Activated CD4-positive, alpha-beta T cell treated with anti-CD3 and anti-CD28 coated beads for 36 hours (primary cell): ENCODE measurements at regions of chr5 and their contacts with region 1.

Region 1: GRCh38 chr5:91219803-91220371 is 163.2 kb downstream of the ARRDC3 start:
- DNase-seq: peak; percentile 66
- ATAC-seq: peak; percentile 51
- H3K4me3 Mint-ChIP-seq: no peak overlapping the region
- H3K27ac Mint-ChIP-seq: no peak overlapping the region
- H3K4me1 Mint-ChIP-seq: no peaks in the 10 kb centered on the region
- H3K27me3 Mint-ChIP-seq: no peaks in the 10 kb centered on the region

Region 2: GRCh38 chr5:90866333-90866732 is 353.6 kb before region 1 on chr5:
- CTCF ChIA-PET with region 1: interaction called, 3 read pairs
- POLR2A ChIA-PET with region 1: no interaction called
- intact Hi-C with region 1: loop called (anchors 5 kb)
- DNase-seq: no peak
- ATAC-seq: no peak
- H3K4me3 Mint-ChIP-seq: no peak overlapping the region
- H3K27ac Mint-ChIP-seq: no peak overlapping the region
- H3K4me1 Mint-ChIP-seq: peaks cover 7% of the 10 kb centered on the region
- H3K27me3 Mint-ChIP-seq: peaks cover 15% of the 10 kb centered on the region

Region 3: GRCh38 chr5:91101600-91102379 is 118.1 kb before region 1 on chr5:
- CTCF ChIA-PET with region 1: interaction called, 6 read pairs
- POLR2A ChIA-PET with region 1: no interaction called
- intact Hi-C with region 1: loop called in 1 of 2 experiments (anchors 2 kb)
- DNase-seq: peak; percentile 76
- ATAC-seq: peak; percentile 89
- H3K4me3 Mint-ChIP-seq: no peak overlapping the region
- H3K27ac Mint-ChIP-seq: no peak overlapping the region
- H3K4me1 Mint-ChIP-seq: no peaks in the 10 kb centered on the region
- H3K27me3 Mint-ChIP-seq: peaks cover 13% of the 10 kb centered on the region